AG04449 (cell line): ENCODE measurements at regions of chr7 and their contacts with region 1.

Region 1: GRCh38 chr7:41003031-41003925 is 699.6 kb downstream of the INHBA start:
- DNase-seq: no peak
- H3K4me3 ChIP-seq: no peak overlapping the region
- CTCF ChIP-seq: peak; percentile 58

Region 2: DNA sequence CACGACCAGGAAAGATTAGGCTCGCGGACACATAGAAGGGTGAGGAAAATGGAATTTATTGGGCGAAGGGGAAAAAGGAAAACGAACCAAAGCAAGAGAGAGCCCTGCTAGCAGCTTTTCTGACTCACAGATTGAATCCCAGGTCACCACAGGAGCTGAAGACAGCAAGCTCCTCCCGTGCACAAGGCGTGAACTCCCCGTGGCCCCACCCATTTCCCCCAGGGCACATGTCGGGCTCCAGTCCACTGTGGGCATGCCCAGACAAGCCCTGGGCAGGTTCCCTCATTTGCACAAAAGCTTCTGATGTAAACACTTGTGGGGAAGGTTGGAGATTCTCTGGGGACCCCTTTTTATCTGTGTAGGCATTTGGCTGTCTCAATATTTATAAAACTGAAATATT is 286.0 kb before region 1 on chr7:
- CTCF ChIA-PET with region 1: no interaction called
- POLR2A ChIA-PET with region 1: no interaction called
- DNase-seq: no peak
- H3K4me3 ChIP-seq: no peak overlapping the region
- CTCF ChIP-seq: no peak

Region 3: DNA sequence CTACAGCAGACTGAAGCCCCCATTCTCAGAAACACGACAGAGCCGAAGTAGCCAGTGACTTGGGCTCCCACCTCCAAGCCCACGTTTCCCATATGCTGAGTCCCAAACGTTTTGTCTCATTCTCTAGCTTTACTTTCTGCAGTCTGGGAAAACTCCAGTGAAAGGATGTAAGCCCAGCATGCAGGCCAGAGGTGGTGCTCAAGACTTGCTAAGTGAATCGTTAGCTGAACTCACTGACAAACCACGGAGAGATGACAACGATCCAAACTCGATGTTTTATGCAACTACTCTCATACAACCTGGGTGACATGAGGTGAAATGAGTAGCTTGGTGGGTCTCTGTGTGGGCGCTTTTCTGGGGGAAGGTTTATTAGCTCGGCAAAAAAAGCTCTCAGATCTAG is 136.7 kb before region 1 on chr7:
- CTCF ChIA-PET with region 1: no interaction called
- POLR2A ChIA-PET with region 1: no interaction called
- DNase-seq: no peak
- H3K4me3 ChIP-seq: no peak overlapping the region
- CTCF ChIP-seq: peak; percentile 27

Region 4: GRCh38 chr7:40990841-40991240 is 12.4 kb before region 1 on chr7:
- CTCF ChIA-PET with region 1: interaction called, 18 read pairs
- POLR2A ChIA-PET with region 1: no interaction called
- DNase-seq: no peak
- H3K4me3 ChIP-seq: no peak overlapping the region
- CTCF ChIP-seq: no peak

Region 5: GRCh38 chr7:41024126-41024525 is 20.8 kb after region 1 on chr7:
- CTCF ChIA-PET with region 1: interaction called, 21 read pairs
- POLR2A ChIA-PET with region 1: interaction called, 3 read pairs
- DNase-seq: no peak
- H3K4me3 ChIP-seq: no peak overlapping the region
- CTCF ChIP-seq: no peak

Region 6: GRCh38 chr7:41058986-41059741 is 55.9 kb after region 1 on chr7:
- CTCF ChIA-PET with region 1: no interaction called
- POLR2A ChIA-PET with region 1: no interaction called
- DNase-seq: no peak
- H3K4me3 ChIP-seq: no peak overlapping the region
- CTCF ChIP-seq: no peak

Region 7: DNA sequence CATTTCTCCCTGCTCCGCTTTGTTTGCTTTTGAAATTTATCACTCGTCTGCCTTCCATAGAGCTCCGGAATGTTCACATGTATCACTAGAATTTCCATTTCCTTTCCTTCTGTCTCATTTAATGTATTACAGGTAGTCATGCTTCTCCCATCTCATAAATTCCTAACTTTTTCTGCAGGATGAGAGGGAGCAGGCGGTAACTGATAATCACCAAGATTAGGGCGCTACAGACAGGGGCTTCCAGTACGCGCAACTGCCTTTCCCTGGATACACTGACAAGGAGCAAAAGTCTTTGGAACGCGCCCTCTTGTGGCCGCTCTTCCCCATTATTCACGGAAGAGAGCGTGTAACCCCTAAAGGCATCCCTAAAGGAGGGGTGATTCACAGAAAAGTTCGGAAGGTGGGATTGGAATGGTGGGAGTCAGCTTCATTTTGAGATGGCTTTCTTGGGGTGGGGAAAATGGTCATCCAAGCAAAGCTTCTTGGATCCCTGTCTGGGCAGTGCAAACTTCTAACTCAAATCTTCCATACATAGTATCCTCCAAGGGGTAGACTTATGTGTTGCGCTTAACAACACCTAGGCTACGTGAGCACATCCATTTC is 693.1 kb after region 1 on chr7:
- CTCF ChIA-PET with region 1: interaction called, 10 read pairs
- POLR2A ChIA-PET with region 1: no interaction called
- DNase-seq: no peak
- H3K4me3 ChIP-seq: peak overlapping the region; percentile 91
- CTCF ChIP-seq: peak; percentile 74

Region 8: GRCh38 chr7:41705109-41705901 is 702.0 kb after region 1 on chr7:
- CTCF ChIA-PET with region 1: interaction called, 13 read pairs
- POLR2A ChIA-PET with region 1: no interaction called
- DNase-seq: peak; percentile 68
- H3K4me3 ChIP-seq: peak overlapping the region; percentile 69
- CTCF ChIP-seq: peak; percentile 94